ENCODE measurements at regions of chr3 and their contacts with region 1.

Region 1: GRCh38 chr3:120095226-120095978 is 1.2 kb upstream of the GSK3B start:
- DNase-seq: peak; percentile 71 to 90 (median 79)
- ATAC-seq: peak; percentile 37
- H3K4me3 ChIP-seq: peak overlapping the region; percentile 69
- H3K4me3 Mint-ChIP-seq: no peak overlapping the region
- H3K27ac ChIP-seq: peak overlapping the region; percentile 92
- H3K27ac Mint-ChIP-seq: peak overlapping the region in 1 of 9 donors; percentile 99
- H3K4me1 ChIP-seq: peaks cover 11 to 26% of the 10 kb centered on the region in 2 donors
- H3K4me1 Mint-ChIP-seq: peaks cover 16 to 38% (median 31%) of the 10 kb centered on the region in 7 donors
- H3K27me3 ChIP-seq: no peaks in the 10 kb centered on the region
- H3K27me3 Mint-ChIP-seq: peaks cover 0 to 5% (median 0%) of the 10 kb centered on the region in 5 donors

Region 2: DNA sequence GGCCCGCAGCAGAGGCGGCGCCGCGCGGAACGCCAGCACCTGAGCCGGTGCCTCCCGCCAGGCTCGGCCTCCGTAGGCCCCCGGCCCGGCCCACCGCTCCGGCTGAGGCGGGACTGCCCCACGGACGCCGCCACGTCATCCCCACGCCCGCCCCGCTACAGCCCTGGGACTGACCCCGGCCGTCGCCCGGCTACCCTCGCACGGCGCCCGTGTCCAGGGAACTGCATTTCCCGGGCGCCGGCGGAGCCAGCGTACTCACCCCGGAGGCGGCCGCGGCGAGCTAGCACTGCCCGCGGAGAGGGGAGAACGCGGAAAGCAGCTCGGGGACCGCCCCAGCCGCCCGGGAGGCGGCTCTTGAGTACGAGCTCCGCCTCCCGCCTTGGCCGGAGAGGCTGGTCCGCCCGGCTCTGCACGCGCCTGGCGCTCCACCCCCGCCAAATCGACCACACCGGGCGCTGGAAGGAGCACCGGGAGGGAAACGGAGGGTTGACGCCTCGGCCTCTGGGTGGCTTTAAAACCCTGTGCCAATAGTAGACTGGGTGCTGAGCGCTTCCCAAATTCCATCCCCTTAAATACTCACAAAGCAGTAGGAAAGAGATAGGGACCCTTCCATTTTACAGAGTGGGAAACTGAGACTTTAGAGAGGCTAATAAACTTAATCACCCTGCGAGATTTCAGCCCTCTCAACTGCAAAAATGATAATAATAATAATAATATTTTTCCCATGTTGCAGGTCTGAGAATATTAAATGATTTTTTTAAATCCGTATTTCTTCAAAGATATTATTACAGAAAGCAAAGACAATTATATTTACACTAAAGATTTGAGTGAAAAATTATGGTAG is 854.6 kb before region 1 on chr3 and contains the start of gene B4GALT4:
- CTCF ChIA-PET with region 1: no interaction called
- POLR2A ChIA-PET with region 1: no interaction called
- intact Hi-C with region 1: loop called (anchors 2 to 10 kb)
- DNase-seq: peak; percentile 59 to 79 (median 63)
- ATAC-seq: peak; percentile 78
- H3K4me3 ChIP-seq: peak within 1 kb of the TSS; percentile 71
- H3K4me3 Mint-ChIP-seq: peak within 1 kb of the TSS; percentile 90 to 99 (median 94)
- H3K27ac ChIP-seq: peak within 1 kb of the TSS; percentile 90
- H3K27ac Mint-ChIP-seq: peak within 1 kb of the TSS; percentile 83 to 96 (median 91)
- H3K4me1 ChIP-seq: peaks cover 23 to 27% of the 10 kb centered on the region in 2 donors
- H3K4me1 Mint-ChIP-seq: peaks cover 24 to 45% (median 36%) of the 10 kb centered on the region in 7 donors
- H3K27me3 ChIP-seq: no peaks in the 10 kb centered on the region
- H3K27me3 Mint-ChIP-seq: no peaks in the 10 kb centered on the region
- total RNA-seq, gene B4GALT4: 18.0 to 39.8 (median 31.9) TPM

Region 3: GRCh38 chr3:119498186-119498987 is 597.0 kb before region 1 on chr3 and contains the start of gene TIMMDC1:
- CTCF ChIA-PET with region 1: no interaction called
- POLR2A ChIA-PET with region 1: interaction called, 15 read pairs
- intact Hi-C with region 1: loop called (anchors 1 kb)
- DNase-seq: peak; percentile 95 to 98 (median 97)
- ATAC-seq: peak; percentile 99
- H3K4me3 ChIP-seq: peak within 1 kb of the TSS; percentile 97
- H3K4me3 Mint-ChIP-seq: peak within 1 kb of the TSS; percentile 95 to 100 (median 99)
- H3K27ac ChIP-seq: peak within 1 kb of the TSS; percentile 96
- H3K27ac Mint-ChIP-seq: peak within 1 kb of the TSS; percentile 98 to 100 (median 99)
- H3K4me1 ChIP-seq: peaks cover 18% of the 10 kb centered on the region in 2 donors
- H3K4me1 Mint-ChIP-seq: peaks cover 22 to 41% (median 34%) of the 10 kb centered on the region in 7 donors
- H3K27me3 ChIP-seq: no peaks in the 10 kb centered on the region
- H3K27me3 Mint-ChIP-seq: no peaks in the 10 kb centered on the region
- total RNA-seq, gene TIMMDC1: 27.1 to 80.1 (median 73.4) TPM

Region 4: GRCh38 chr3:119819806-119820205 is 275.6 kb before region 1 on chr3:
- CTCF ChIA-PET with region 1: no interaction called
- POLR2A ChIA-PET with region 1: no interaction called
- intact Hi-C with region 1: loop called (anchors 5 kb)
- DNase-seq: no peak
- ATAC-seq: no peak
- H3K4me3 ChIP-seq: no peak overlapping the region
- H3K4me3 Mint-ChIP-seq: no peak overlapping the region
- H3K27ac ChIP-seq: no peak overlapping the region
- H3K27ac Mint-ChIP-seq: no peak overlapping the region
- H3K4me1 ChIP-seq: no peaks in the 10 kb centered on the region
- H3K4me1 Mint-ChIP-seq: peaks cover 0 to 9% (median 4%) of the 10 kb centered on the region in 7 donors
- H3K27me3 ChIP-seq: no peaks in the 10 kb centered on the region
- H3K27me3 Mint-ChIP-seq: no peaks in the 10 kb centered on the region

Region 5: DNA sequence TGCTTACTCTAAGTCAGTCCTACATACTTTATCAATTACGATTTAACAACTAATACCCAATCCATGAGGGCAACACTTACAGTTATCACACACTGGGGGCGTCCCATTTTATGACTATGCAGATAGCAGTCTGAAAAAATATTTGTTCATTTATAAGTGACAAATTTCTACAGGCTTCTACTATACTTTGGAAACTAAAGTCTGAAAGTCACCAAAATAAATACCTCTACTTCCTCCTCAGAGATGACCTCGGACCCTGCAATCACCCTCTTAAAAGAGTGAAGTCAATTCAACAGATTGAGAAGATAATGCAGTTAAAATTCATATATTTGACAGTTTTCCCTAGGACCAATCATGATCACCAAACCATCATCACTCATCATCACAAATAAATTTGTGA is 77.7 kb before region 1 on chr3:
- CTCF ChIA-PET with region 1: no interaction called
- POLR2A ChIA-PET with region 1: no interaction called
- intact Hi-C with region 1: loop called in 1 of 2 experiments (anchors 5 kb)
- DNase-seq: no peak
- ATAC-seq: no peak
- H3K4me3 ChIP-seq: no peak overlapping the region
- H3K4me3 Mint-ChIP-seq: peak overlapping the region in 1 of 10 donors; percentile 14
- H3K27ac ChIP-seq: no peak overlapping the region
- H3K27ac Mint-ChIP-seq: peak overlapping the region in 4 of 9 donors; percentile 1 to 42 (median 9)
- H3K4me1 ChIP-seq: peaks cover 0 to 5% of the 10 kb centered on the region in 2 donors
- H3K4me1 Mint-ChIP-seq: peaks cover 39 to 88% (median 81%) of the 10 kb centered on the region in 7 donors
- H3K27me3 ChIP-seq: no peaks in the 10 kb centered on the region
- H3K27me3 Mint-ChIP-seq: no peaks in the 10 kb centered on the region

Region 6: GRCh38 chr3:120417272-120417911 is 322.0 kb after region 1 on chr3:
- CTCF ChIA-PET with region 1: no interaction called
- POLR2A ChIA-PET with region 1: interaction called, 4 read pairs
- intact Hi-C with region 1: loop called (anchors 1 to 2 kb)
- DNase-seq: peak; percentile 58 to 83 (median 79)
- ATAC-seq: peak; percentile 100
- H3K4me3 ChIP-seq: peak overlapping the region; percentile 72
- H3K4me3 Mint-ChIP-seq: peak overlapping the region; percentile 80 to 89 (median 88)
- H3K27ac ChIP-seq: no peak overlapping the region
- H3K27ac Mint-ChIP-seq: peak overlapping the region in 8 of 9 donors; percentile 13 to 76 (median 32)
- H3K4me1 ChIP-seq: no peaks in the 10 kb centered on the region
- H3K4me1 Mint-ChIP-seq: peaks cover 16 to 24% (median 18%) of the 10 kb centered on the region in 7 donors
- H3K27me3 ChIP-seq: no peaks in the 10 kb centered on the region
- H3K27me3 Mint-ChIP-seq: peaks cover 0 to 7% (median 6%) of the 10 kb centered on the region in 5 donors

Region 7: GRCh38 chr3:121660356-121661171 is 1565.2 kb after region 1 on chr3 and contains the start of gene HCLS1:
- CTCF ChIA-PET with region 1: no interaction called
- POLR2A ChIA-PET with region 1: no interaction called
- intact Hi-C with region 1: loop called in 1 of 2 experiments (anchors 10 kb)
- DNase-seq: peak; percentile 60 to 87 (median 79)
- ATAC-seq: peak; percentile 87
- H3K4me3 ChIP-seq: peak within 1 kb of the TSS; percentile 90
- H3K4me3 Mint-ChIP-seq: peak within 1 kb of the TSS; percentile 82 to 99 (median 95)
- H3K27ac ChIP-seq: peak within 1 kb of the TSS; percentile 90
- H3K27ac Mint-ChIP-seq: peak within 1 kb of the TSS; percentile 96 to 100 (median 99)
- H3K4me1 ChIP-seq: peaks cover 34 to 41% of the 10 kb centered on the region in 2 donors
- H3K4me1 Mint-ChIP-seq: peaks cover 41 to 68% (median 57%) of the 10 kb centered on the region in 7 donors
- H3K27me3 ChIP-seq: no peaks in the 10 kb centered on the region
- H3K27me3 Mint-ChIP-seq: no peaks in the 10 kb centered on the region
- total RNA-seq, gene HCLS1: 275 to 357 (median 311) TPM